HEK293 (cell line): ENCODE measurements at regions of chr21 and their contacts with region 1.

Region 1: GRCh38 chr21:36209626-36210171 is 53.1 kb downstream of the DOP1B start:
- H3K4me3 ChIP-seq: no peak overlapping the region
- H3K27ac ChIP-seq: peak overlapping the region; percentile 53
- H3K4me1 ChIP-seq: peaks cover 5% of the 10 kb centered on the region
- CTCF ChIP-seq: peak; percentile 81

Region 2: GRCh38 chr21:36125512-36126222 is 84.0 kb before region 1 on chr21:
- CTCF ChIA-PET with region 1: interaction called, 10 read pairs
- POLR2A ChIA-PET with region 1: no interaction called
- H3K4me3 ChIP-seq: no peak overlapping the region
- H3K27ac ChIP-seq: no peak overlapping the region
- H3K4me1 ChIP-seq: peaks cover 2% of the 10 kb centered on the region; the same call in 1 of the 2 replicates
- CTCF ChIP-seq: peak; percentile 68

Region 3: DNA sequence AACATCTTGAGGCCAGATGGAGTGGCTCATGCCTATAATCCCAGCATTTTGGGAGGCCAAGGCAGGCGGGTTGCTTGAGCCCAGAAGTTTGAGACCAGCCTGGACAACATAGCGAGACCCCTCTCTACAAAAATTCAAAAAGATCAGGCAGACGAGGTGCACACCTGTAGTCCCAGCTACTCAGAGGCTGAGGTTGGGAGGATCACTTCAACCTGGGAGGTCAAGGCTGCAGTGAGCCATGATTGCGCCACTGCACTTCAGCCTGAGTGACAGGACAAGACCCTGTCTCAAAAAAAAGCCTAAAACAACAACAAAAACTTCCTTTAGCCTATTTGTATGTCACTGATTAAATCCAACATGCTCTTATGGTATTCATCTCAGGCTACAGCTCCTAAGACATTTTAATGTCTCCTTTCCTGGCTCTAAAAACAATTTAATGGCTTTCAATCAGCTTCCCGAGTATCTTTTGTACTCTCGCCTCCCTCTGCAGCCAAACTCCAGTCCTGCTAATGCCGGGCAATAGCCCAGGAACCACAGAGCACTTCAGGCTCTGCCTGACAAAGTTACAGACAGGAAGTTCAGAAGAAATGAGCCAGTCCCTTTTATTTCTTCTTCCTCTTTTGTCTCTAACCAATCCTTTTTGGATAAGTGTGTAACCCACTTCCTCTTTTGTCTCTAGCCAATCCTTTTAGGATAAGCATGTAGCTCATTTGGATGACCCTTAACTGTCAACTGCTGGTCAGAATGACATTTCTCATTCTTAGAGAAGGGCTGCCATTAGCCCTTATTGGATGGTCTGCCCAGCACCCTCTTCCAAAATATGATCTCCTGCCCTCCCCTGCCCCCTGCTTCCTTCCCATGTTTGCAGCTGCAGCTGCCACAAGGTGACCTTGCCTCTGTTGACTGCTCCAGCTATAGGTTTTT is 59.6 kb before region 1 on chr21:
- CTCF ChIA-PET with region 1: interaction called, 74 read pairs
- POLR2A ChIA-PET with region 1: interaction called, 18 read pairs
- H3K4me3 ChIP-seq: no peak overlapping the region
- H3K27ac ChIP-seq: no peak overlapping the region
- H3K4me1 ChIP-seq: no peaks in the 10 kb centered on the region
- CTCF ChIP-seq: no peak

Region 4: DNA sequence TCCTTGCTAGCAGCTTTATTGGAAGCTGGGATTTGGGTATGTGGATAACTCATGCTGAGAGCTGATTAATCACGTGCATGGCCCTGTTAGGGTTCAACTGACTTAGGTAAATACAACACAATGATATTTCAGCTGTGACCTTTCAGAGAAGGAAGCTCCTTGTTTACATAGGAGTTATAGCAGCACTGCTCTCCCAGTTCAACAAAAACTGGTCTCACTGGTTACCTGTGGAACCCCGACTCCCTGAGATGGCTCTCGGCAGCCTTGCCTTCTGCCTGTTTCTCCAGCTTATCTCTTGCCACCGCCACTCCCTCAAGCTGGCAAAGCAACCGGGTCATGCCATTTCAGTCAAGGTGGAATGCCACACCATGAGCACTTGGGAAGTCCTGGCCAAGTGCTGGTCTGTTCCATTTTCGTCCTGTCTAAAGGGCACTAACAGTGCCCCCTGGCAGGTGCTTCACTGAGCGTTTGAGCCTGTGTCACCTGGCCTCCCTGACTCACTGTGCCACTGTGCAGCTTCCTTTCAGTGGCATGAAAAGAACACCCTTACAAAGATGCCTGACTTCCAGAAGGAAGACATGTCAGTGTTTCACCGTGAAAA is 21.5 kb before region 1 on chr21:
- CTCF ChIA-PET with region 1: interaction called, 12 read pairs
- POLR2A ChIA-PET with region 1: no interaction called
- H3K4me3 ChIP-seq: no peak overlapping the region
- H3K27ac ChIP-seq: no peak overlapping the region
- H3K4me1 ChIP-seq: peaks cover 11% of the 10 kb centered on the region
- CTCF ChIP-seq: no peak

Region 5: GRCh38 chr21:36319765-36320420 is 110.2 kb after region 1 on chr21 and contains the start of gene MORC3:
- CTCF ChIA-PET with region 1: interaction called, 4 read pairs
- POLR2A ChIA-PET with region 1: interaction called, 10 read pairs
- H3K4me3 ChIP-seq: peak within 1 kb of the TSS; percentile 83
- H3K27ac ChIP-seq: peak within 1 kb of the TSS; percentile 88
- H3K4me1 ChIP-seq: peaks cover 12% of the 10 kb centered on the region
- CTCF ChIP-seq: no peak